Body of pancreas (tissue), 4 donors: ENCODE measurements at regions of chr13 and their contacts with region 1.

Region 1: DNA sequence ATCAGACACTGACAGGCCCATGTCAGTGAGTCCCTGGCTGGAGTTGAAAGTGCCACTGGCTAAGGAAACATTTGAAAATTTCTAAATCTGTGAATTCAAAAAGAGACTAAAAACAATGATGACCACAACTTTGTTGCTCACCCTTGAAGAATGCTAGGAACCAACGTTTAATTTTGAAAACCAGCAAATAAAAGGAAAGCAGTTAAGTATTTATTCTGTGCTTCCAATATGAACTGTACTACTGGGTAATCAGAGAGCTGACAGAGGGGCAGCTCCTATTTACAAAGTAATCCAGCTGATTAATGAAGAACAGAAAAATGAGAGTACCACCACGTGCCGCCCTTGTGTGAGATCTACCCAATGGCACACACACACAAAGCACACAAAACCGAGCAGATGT is 44.7 kb upstream of the LATS2 start:
- DNase-seq: no peak
- ATAC-seq: no peak
- H3K4me3 ChIP-seq: no peak overlapping the region
- H3K27ac ChIP-seq: no peak overlapping the region
- H3K4me1 ChIP-seq: no peaks in the 10 kb centered on the region
- H3K27me3 ChIP-seq: no peaks in the 10 kb centered on the region
- CTCF ChIP-seq: no peak
- POLR2A ChIP-seq: no peak

Region 2: DNA sequence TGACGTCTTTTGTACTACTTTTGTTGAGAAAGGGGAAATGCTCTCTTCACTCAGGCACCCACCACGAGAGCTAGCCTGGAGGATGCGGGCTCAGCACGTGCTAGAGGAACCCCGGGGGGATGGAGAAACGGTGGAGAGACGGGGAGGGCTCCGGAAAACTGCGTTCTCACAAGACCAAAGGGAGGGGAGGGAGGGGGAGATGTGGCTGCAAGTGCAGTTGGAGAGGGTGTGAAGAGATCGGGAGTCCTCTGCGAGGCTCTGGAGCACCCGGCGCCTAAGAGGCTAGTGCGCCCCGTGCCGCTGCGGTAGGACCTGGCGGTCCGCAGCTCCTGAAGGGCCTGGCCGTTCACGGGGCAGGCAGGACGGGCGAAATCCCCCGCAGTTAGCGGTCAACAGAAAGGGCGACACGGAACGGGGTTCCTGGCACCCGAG is 160.1 kb before region 1 on chr13:
- intact Hi-C with region 1: loop called (anchors 10 kb)
- DNase-seq: peak in 1 of 4 donors; percentile 32
- ATAC-seq: no peak
- H3K4me3 ChIP-seq: no peak overlapping the region
- H3K27ac ChIP-seq: no peak overlapping the region
- H3K4me1 ChIP-seq: peaks cover 13% of the 10 kb centered on the region
- H3K27me3 ChIP-seq: no peaks in the 10 kb centered on the region
- CTCF ChIP-seq: no peak
- POLR2A ChIP-seq: no peak

Region 3: DNA sequence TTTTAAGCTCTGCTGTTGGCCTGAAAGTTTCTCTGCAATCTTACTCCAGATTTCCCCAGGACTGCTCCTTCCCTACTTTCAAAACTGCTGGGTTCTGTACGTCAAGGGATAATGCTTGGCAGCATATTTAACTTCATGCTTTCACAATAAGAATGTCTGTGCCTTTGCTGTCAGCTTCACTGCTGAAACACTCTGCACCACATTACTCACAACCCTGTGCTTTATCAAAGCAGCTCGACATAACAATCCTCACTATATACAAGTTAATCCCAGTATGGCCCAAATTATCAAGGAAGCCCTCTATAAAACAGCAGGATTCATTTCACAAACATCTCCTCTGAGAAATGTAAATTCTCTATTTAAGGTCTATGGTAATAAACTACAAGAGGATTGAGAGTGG is 62.2 kb before region 1 on chr13:
- intact Hi-C with region 1: no loop called
- DNase-seq: no peak
- ATAC-seq: peak; percentile 18
- H3K4me3 ChIP-seq: no peak overlapping the region
- H3K27ac ChIP-seq: no peak overlapping the region
- H3K4me1 ChIP-seq: peaks cover 23% of the 10 kb centered on the region
- H3K27me3 ChIP-seq: no peaks in the 10 kb centered on the region
- CTCF ChIP-seq: no peak
- POLR2A ChIP-seq: no peak